HEK293T (cell line): ENCODE measurements at regions of chr7 and their contacts with region 1.

Region 1: DNA sequence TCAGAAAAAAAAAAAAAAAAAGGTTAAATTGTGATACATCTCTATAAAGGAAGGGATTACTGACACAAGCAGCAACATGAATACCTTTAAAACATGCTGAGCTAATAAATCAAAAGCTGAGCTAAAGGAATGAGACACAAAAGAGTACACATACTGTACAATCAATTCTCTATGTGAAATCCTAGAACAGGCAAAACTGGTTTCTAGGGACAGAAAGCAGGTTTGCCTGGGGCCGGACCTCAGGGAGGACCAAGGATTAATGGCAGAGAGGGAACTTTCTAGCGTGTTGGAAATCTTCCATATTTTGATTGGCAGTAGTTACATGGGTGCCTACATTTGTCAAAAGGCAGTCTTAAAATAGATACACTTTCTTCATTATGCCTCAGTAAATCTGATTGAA is 52.5 kb downstream of the KLRG2 start:
- DNase-seq: no peak

Region 2: DNA sequence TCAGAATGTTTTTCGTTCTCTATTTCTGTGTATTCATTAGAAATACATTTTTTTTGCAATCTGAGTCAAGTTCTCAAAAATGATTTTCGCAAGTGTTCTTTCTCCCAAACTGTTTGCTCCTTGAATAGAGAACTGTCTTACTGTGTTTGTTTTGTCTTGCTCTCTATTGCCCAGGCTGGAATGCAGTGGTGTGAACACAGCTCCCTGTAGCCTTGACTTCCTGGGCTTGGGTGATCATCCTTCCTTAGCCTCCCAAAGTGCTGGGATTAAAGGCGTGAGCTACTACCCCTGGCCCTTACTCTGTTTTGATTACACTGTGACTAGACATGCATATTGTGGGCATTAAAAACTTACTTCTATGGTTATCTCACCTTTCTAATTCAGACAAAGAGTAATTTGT is 14.6 kb before region 1 on chr7:
- CTCF ChIA-PET with region 1: interaction called, 16 read pairs
- POLR2A ChIA-PET with region 1: no interaction called
- DNase-seq: no peak

Region 3: GRCh38 chr7:139451638-139452037 is 20.6 kb after region 1 on chr7:
- CTCF ChIA-PET with region 1: interaction called, 49 read pairs
- POLR2A ChIA-PET with region 1: no interaction called
- DNase-seq: no peak

Region 4: DNA sequence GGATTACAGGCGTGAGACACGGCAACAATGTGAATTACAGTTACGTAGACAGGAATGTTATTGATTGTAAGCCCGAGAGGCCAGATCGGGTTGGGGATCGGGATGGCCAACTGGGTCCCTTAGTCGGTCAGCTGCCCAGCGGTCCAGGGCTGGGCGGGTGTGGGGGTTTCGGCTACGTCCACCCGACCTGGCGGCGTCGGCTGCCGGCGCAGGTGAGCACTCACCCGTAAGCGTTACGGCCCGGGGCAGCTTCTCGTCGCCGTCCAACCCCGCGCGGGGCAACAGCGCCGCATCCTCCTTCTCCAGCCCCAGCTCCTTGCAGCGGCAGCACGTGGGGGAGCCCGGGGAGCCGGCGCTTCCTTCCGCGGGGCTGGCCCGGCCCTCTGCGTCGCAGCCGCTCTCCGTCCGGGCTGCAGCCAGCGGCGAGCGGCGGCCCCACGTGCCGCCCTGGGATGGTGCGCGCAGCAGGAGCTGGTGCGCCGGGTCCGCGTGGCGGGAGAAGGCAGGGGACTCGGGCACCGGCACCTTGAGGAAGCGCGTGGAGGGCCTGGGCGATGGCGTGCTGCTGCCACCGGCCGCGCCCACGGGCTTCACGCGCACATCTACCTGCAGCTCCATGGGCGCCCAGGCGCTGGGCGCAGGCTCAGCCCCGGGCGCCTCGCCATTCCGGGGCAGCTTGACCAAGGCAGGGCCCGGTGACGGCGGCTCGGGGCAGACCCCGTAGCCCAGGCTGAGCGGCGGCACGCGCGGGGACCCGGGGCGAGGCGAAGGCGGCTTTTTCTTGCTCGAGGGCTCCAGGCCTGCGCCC is 51.9 kb after region 1 on chr7:
- CTCF ChIA-PET with region 1: interaction called, 13 read pairs
- POLR2A ChIA-PET with region 1: interaction called, 9 read pairs
- DNase-seq: peak; percentile 76

Region 5: DNA sequence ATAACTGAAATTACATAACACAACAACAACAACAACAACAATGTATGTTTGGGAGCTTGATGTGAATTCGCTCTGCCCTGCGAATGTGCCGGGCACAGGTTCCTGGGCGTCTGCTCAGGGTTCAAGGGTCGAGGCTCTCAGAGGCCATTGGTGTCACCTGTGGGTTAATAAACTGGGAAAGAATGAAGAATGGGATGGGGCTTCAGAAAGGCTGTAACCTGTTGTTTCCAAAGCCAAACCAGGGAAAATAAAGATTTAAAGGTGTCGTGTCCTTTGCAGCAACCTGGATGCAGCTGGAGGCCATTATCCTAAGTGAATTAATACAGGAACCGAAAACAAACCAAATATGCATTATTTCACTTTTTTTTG is 69.7 kb after region 1 on chr7:
- CTCF ChIA-PET with region 1: interaction called, 11 read pairs
- POLR2A ChIA-PET with region 1: no interaction called
- DNase-seq: no peak